Heart left ventricle (tissue), 16 donors: ENCODE measurements at regions of chr17 and their contacts with region 1.

Region 1: DNA sequence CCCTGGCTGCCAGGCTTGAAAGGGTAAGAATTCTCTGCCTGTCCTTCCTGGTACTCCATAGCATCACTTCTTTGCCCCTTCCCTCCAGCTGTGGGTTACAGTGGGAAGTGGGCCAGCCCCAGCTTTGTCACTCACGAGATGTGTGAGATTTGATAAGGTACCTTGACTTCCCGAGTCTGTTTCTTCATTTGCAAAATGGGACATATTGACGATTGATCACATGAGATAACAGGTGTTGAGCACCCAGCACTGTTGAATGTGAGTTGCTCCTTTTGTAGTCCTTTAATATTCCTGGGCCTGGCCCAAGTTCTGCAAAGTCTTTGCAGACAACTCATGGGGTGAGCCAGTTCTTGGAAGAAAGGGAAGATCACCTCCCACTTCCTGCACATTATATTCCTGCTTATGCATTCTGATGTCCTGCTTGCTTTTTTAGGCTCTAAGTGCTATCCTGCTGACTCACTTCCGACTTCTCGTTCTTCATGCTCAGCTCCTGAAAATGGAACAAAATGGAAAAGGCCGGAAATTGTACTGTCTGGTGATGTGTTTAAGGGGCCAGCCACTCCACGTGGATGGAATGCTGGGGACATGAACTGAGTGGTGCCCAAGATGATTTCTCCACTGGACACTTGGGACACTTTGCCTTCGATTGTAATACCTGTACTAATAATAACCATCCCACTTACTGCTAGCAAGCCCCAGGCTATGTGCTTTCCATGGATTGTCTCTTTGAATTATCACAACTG is 8.3 kb upstream of the NLK start:
- DNase-seq: peak in 1 of 5 donors; percentile 18
- ATAC-seq: peak; percentile 61 to 95 (median 80)
- H3K4me3 ChIP-seq: no peak overlapping the region
- H3K27ac ChIP-seq: peak overlapping the region in 9 of 12 donors; percentile 6 to 72 (median 43)
- H3K4me1 ChIP-seq: peaks cover 0 to 25% (median 3%) of the 10 kb centered on the region in 12 donors
- H3K27me3 ChIP-seq: no peaks in the 10 kb centered on the region
- CTCF ChIP-seq: no peak
- POLR2A ChIP-seq: no peak

Region 2: DNA sequence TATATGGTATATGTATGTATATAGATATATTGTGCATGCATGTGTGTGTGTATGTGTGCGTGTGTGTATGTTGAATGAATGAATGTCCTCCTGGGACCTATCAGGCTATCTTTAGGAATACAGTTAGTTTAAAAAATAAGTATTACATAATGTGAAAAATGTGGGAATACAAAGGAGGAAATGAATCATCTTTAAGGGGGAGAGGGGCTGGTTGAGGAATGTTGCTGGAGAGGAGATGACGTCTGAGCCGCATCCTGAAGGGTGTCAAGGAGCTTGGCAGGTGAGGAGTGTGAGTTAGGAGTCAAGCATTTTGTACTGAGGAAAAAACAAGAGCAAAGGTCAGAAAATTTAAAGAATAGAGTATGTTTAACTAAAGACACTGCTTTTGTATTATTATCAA is 54.1 kb before region 1 on chr17:
- intact Hi-C with region 1: loop called in 1 of 10 experiments (anchors 10 kb)
- DNase-seq: peak in 3 of 5 donors; percentile 39 to 60 (median 40)
- ATAC-seq: peak in 3 of 4 donors; percentile 56 to 91 (median 70)
- H3K4me3 ChIP-seq: no peak overlapping the region
- H3K27ac ChIP-seq: peak overlapping the region in 8 of 12 donors; percentile 4 to 64 (median 56)
- H3K4me1 ChIP-seq: peaks cover 0 to 20% (median 7%) of the 10 kb centered on the region in 12 donors
- H3K27me3 ChIP-seq: peaks cover 0 to under 1% (median 0%) of the 10 kb centered on the region in 9 donors
- CTCF ChIP-seq: no peak
- POLR2A ChIP-seq: no peak